Activated CD4-positive, alpha-beta memory T cell treated with anti-CD3 and anti-CD28 coated beads, Interleukin-2, amount 10 ng/mL, durations not matched to agents 7 days and 5 days (primary cell): ENCODE measurements at regions of chr6 and their contacts with region 1.

Region 1: GRCh38 chr6:159789377-159790148 is at the start of gene TCP1:
- DNase-seq: peak; percentile 99
- H3K4me3 Mint-ChIP-seq: peak within 1 kb of the TSS; percentile 100
- H3K27ac Mint-ChIP-seq: peak within 1 kb of the TSS; percentile 98
- H3K4me1 Mint-ChIP-seq: peaks cover 64% of the 10 kb centered on the region
- H3K27me3 Mint-ChIP-seq: no peaks in the 10 kb centered on the region
- total RNA-seq, gene TCP1: 203 to 212 TPM

Region 2: DNA sequence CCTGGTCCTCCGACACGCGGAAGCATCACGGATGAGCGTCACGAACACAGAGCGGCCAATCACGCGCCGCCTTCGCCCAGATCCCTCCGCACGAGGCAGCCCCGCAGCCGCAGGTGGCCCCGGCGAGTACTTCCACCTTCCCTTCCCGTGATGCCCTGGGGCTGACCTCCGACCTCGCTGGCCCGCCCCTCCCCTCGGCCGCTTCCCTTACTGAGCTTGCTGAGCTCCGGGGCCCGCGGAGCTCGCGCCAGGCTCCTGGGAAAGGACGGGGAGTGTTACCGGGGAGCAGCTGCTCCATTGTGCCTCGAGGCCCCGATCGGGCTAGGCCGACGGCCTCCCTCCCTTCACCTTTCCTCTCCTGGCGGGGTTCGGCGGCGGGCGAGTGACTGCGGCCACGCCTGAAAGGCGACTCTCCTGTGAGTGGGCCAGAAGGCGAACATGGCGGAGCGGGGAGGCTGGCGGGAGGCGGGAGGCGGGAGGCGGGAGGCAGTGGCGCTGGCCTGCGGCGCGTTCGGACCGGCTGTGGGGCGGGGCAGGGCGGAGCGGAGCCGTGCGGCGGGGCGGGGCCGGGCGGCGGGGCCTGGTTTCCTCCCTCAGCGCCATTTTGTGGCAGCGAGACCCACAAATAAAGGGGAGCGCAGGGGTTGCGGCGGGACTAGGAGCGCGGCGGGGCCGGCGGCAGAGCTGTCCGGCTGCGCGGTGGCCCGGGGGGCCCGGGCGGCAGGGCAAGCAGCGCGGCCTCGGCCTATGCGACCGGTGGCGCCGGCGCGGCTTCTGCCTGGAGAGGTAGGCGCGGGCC is 62.4 kb before region 1 on chr6 and contains the start of gene WTAP:
- CTCF ChIA-PET with region 1: interaction called, 22 read pairs
- POLR2A ChIA-PET with region 1: interaction called, 195 read pairs
- DNase-seq: peak; percentile 97
- H3K4me3 Mint-ChIP-seq: peak within 1 kb of the TSS; percentile 96
- H3K27ac Mint-ChIP-seq: peak within 1 kb of the TSS; percentile 96
- H3K4me1 Mint-ChIP-seq: peaks cover 61% of the 10 kb centered on the region
- H3K27me3 Mint-ChIP-seq: no peaks in the 10 kb centered on the region
- total RNA-seq, gene WTAP: 124 TPM

Region 3: GRCh38 chr6:159778542-159779103 is 10.9 kb before region 1 on chr6:
- CTCF ChIA-PET with region 1: interaction called, 3 read pairs
- POLR2A ChIA-PET with region 1: interaction called, 15 read pairs
- DNase-seq: no peak
- H3K4me3 Mint-ChIP-seq: no peak overlapping the region
- H3K27ac Mint-ChIP-seq: no peak overlapping the region
- H3K4me1 Mint-ChIP-seq: peaks cover 17% of the 10 kb centered on the region
- H3K27me3 Mint-ChIP-seq: no peaks in the 10 kb centered on the region

Region 4: DNA sequence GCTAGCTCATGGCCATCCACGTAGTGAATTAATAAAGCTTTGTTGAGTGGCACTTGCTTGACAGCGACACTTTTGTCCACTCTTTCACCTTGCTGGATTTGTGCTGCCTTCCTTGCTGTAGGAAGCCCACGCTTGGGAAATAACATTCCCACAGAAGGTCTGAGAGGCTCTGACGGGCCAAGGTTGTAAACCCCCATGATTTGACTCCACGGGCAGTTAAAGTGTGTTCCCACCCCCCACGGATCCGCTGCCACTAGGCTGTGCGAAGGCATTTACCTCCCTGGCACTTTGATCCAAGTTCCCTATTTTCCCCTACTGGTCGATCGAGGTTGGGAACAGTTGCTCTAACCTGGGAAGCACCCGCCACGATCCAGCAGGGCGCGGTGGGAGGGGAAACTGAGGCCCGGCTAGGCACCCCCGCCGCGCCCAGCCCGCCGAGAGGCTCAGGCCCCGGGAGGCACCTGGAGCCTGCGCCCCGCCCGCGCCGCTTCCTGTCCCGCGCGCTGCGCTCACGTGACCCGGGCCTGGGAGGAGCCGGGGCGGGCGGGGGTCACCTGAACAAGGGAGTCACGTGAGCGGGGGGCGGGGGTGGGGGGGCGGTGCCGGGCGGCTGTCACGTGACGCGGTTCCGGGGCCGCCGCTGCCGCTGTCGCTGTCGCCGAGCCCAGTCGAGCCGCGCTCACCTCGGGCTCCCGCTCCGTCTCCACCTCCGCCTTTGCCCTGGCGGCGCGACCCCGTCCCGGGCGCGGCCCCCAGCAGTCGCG is 179.1 kb after region 1 on chr6 and contains the start of gene IGF2R:
- CTCF ChIA-PET with region 1: no interaction called
- POLR2A ChIA-PET with region 1: interaction called, 45 read pairs
- DNase-seq: peak; percentile 95
- H3K4me3 Mint-ChIP-seq: peak within 1 kb of the TSS; percentile 90
- H3K27ac Mint-ChIP-seq: peak within 1 kb of the TSS; percentile 83
- H3K4me1 Mint-ChIP-seq: peaks cover 44% of the 10 kb centered on the region
- H3K27me3 Mint-ChIP-seq: peaks cover 3% of the 10 kb centered on the region
- total RNA-seq, gene IGF2R: 66.9 to 70.9 TPM

Region 5: DNA sequence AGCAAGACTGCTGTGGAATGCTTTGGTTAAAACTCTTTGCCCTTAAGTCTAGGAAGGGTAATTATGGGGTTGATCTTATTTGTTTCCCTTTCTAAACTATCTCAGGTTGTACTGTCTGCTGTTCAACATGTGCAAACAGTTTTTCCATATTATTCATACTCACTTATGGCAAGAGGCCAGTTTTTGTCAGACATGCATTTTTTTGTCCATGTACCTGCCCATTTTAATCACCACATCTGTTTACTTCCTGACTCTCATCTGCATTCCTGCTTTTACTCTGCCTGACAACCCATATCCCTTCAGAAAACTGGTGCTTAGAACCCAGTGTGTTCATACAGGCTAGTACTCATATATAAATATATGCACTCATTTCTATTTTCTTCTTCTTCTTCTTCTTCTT is 794.2 kb after region 1 on chr6:
- CTCF ChIA-PET with region 1: no interaction called
- POLR2A ChIA-PET with region 1: no interaction called
- DNase-seq: no peak
- H3K4me3 Mint-ChIP-seq: no peak overlapping the region
- H3K27ac Mint-ChIP-seq: no peak overlapping the region
- H3K4me1 Mint-ChIP-seq: no peaks in the 10 kb centered on the region
- H3K27me3 Mint-ChIP-seq: peaks cover 3% of the 10 kb centered on the region